HepG2 (cell line): ENCODE measurements at regions of chr18 and their contacts with region 1.

Region 1: GRCh38 chr18:62741118-62741566 is 25.8 kb downstream of the PHLPP1 start:
- DNase-seq: peak; percentile 93
- ATAC-seq: peak; percentile 84
- H3K4me3 ChIP-seq: peak overlapping the region; percentile 56 to 66 (median 59)
- H3K27ac ChIP-seq: peak overlapping the region; percentile 92
- H3K4me1 ChIP-seq: peaks cover 80% of the 10 kb centered on the region
- H3K27me3 ChIP-seq: no peaks in the 10 kb centered on the region
- CTCF ChIP-seq: no peak
- EP300 ChIP-seq: peak in 1 of 2 experiments; percentile 88; a peak in 2 of 4 replicates
- POLR2A ChIP-seq: no peak
- RAD21 ChIP-seq: no peak

Region 2: DNA sequence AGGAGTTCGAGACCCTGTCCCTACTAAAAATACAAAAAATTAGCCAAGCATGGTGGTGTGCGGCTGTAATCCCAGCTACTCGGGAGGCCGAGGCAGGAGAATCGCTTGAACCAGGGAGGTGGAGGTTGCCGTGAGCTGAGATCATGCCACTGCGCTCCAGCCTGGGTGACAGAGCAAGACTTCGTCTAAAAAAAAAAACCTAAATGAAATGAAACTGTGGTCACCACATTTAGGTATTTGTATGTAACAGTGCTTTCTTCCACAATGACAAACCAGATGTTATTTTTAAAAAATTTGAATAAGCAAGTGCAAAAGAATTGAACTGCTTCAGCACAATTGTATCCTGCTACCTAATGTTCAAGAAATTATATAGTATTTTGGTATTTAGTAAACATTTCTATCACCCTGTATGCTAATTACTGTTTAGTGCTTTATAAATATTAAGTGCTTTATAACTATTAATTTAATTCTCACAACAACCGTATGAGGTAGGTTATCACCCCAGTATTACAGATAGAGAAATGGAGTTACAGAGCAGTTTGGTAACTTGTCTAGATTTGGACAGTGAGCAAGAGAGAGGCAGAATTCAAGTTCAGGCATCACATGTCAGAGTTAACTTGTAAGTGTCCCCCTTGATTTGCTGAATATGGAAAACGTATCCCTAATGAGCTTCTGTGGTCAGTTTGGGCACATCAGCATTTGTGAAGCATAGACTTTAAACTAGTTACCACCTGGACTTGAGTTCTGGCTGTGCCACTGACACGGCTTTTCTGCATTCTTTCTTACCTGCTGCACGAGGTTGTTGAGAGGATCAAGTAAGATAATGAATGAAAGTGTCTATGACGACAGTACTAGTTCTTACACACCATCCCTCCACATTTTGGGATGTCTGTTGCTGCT is 11.4 kb before region 1 on chr18:
- CTCF ChIA-PET with region 1: no interaction called
- POLR2A ChIA-PET with region 1: interaction called, 12 read pairs
- in situ Hi-C with region 1: no loop called
- intact Hi-C with region 1: no loop called
- DNase-seq: no peak
- ATAC-seq: no peak
- H3K4me3 ChIP-seq: no peak overlapping the region
- H3K27ac ChIP-seq: no peak overlapping the region
- H3K4me1 ChIP-seq: peaks cover 15% of the 10 kb centered on the region
- H3K27me3 ChIP-seq: no peaks in the 10 kb centered on the region
- CTCF ChIP-seq: no peak
- EP300 ChIP-seq: no peak
- POLR2A ChIP-seq: no peak
- RAD21 ChIP-seq: no peak

Region 3: DNA sequence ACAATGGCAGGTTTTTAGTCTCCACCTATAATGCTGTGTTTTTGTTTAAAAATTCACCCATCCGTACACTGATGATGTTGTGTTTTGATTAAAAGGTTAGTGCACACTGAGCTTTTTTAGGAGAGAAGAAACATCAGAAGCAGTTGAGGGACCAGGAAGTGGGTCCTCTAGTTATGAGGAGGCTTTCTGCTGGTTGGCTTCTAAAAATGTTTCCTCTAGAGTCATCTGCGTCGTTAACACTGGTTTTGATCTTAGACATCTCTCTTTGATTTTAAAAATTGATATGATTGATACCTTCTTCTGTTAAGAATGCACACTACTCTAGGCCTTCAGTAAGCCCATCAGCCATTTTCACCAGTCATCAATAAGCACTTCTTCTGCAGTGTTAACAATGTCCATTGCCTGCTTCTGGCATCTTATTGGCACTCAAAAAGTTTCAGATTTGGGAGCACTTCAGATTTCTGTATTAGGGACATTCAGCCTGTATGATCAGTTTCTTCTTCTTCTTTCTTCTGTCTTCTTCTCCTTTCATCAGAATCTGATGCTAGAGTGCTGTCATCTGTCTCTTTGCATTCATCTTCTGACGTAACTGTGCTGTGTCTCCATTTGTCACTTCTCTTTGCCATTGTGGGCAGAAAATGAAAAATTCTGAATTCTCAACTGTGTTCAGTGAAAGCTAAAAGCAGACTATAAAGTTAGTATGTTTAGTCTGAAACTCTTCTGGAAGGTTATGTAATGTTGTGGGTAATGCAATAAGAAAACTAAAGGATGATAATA is 30.5 kb after region 1 on chr18:
- CTCF ChIA-PET with region 1: no interaction called
- POLR2A ChIA-PET with region 1: interaction called, 19 read pairs
- in situ Hi-C with region 1: no loop called
- intact Hi-C with region 1: loop called (anchors 1 kb)
- DNase-seq: no peak
- ATAC-seq: no peak
- H3K4me3 ChIP-seq: no peak overlapping the region
- H3K27ac ChIP-seq: peak overlapping the region; percentile 25
- H3K4me1 ChIP-seq: peaks cover 78% of the 10 kb centered on the region
- H3K27me3 ChIP-seq: no peaks in the 10 kb centered on the region
- CTCF ChIP-seq: no peak
- EP300 ChIP-seq: no peak
- POLR2A ChIP-seq: no peak
- RAD21 ChIP-seq: no peak

Region 4: DNA sequence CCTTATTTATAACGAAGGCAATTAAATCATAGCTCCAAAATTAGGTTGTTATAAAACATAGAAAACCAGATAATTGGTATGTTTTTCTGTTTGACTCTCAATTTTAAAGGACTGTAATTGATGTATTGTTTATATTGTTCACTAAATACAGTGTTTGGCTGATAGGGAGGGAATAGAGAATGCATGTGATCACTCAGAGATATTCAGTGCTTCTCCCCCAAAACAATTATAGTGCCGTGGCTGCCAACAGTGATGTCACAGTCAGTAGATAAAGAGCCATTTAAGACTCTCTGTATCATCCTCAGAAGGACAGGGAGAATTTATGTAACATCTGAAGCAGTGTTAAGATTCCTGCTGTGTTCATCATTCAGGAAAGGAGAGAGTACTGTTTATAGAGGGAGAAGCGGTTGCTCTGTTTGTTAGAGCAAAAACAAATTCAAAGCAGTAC is 43.8 kb after region 1 on chr18:
- CTCF ChIA-PET with region 1: no interaction called
- POLR2A ChIA-PET with region 1: no interaction called
- in situ Hi-C with region 1: no loop called
- intact Hi-C with region 1: loop called (anchors 5 kb)
- DNase-seq: no peak
- ATAC-seq: no peak
- H3K4me3 ChIP-seq: no peak overlapping the region
- H3K27ac ChIP-seq: no peak overlapping the region
- H3K4me1 ChIP-seq: peaks cover 81% of the 10 kb centered on the region
- H3K27me3 ChIP-seq: no peaks in the 10 kb centered on the region
- CTCF ChIP-seq: no peak
- EP300 ChIP-seq: no peak
- POLR2A ChIP-seq: no peak
- RAD21 ChIP-seq: no peak

Region 5: GRCh38 chr18:63795614-63796013 is 1054.5 kb after region 1 on chr18:
- CTCF ChIA-PET with region 1: no interaction called
- POLR2A ChIA-PET with region 1: no interaction called
- in situ Hi-C with region 1: no loop called
- intact Hi-C with region 1: no loop called
- DNase-seq: no peak
- ATAC-seq: no peak
- H3K4me3 ChIP-seq: no peak overlapping the region
- H3K27ac ChIP-seq: no peak overlapping the region
- H3K4me1 ChIP-seq: no peaks in the 10 kb centered on the region
- H3K27me3 ChIP-seq: no peaks in the 10 kb centered on the region
- CTCF ChIP-seq: no peak
- EP300 ChIP-seq: no peak
- POLR2A ChIP-seq: no peak
- RAD21 ChIP-seq: no peak